AG04449 (cell line): ENCODE measurements at regions of chr22 and their contacts with region 1.

Region 1: GRCh38 chr22:42621505-42622002 is 6.9 kb upstream of the POLDIP3 start:
- DNase-seq: no peak
- H3K4me3 ChIP-seq: no peak overlapping the region
- CTCF ChIP-seq: peak; percentile 97

Region 2: DNA sequence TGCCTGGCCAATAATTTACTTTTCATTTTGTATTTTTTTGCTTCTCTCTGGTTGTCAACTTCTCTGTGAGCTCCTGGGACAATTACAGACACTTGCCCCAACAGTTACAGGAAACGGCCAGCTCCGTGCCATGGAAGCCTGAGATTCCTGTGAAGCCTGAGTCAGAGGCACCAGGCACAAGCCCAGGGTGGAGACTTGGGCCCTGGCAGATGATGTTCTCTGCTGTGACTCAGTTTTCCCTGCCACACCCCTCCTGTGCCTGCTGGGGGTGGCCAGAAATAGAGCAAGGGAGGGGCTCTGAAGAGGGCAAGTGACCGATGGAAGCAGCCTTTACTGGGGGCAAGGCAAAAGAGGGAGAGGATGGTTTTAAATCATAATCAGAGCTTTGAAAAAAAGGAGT is 14.0 kb after region 1 on chr22:
- CTCF ChIA-PET with region 1: interaction called, 45 read pairs
- POLR2A ChIA-PET with region 1: interaction called, 3 read pairs
- DNase-seq: peak; percentile 76
- H3K4me3 ChIP-seq: no peak overlapping the region
- CTCF ChIP-seq: no peak

Region 3: DNA sequence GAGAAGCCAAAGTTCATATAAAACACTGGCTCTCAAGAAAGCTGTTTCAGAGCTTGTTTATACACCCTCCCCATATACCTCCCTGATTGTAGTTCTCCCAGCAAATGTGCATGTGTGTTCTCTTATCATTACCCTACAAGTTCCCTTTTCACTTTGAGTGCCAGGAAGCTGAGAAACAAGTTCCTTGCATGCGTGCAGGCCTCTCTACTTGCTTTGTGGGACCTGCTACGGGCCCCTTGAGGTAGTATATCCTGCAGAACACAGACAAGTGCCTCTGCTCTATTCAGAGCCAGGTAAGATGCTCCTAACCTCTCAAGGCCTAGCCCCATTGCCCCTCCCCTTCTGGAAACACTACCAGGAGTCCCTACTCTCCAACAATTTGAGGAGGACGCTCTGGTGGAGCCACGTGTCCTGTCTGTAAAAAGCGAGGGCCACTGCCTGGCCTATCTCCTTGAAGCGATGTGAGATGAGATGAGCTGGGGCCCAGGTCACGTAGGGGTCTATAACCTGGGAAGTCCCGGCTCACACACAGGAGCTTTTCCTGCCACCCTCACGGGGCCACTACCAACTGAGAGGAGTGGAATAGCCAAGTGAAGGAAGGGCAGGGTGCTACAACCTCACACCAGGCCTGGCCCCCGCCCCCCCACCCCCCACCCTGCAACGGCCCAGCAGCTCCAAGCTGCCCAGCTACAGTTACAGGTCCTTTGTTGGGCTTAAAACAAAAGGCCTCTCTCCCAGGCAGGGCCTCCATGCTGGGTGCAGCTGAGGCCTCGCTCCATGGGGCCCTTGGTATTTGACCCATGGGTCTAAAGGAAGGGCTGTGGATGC is 21.5 kb after region 1 on chr22:
- CTCF ChIA-PET with region 1: interaction called, 34 read pairs
- POLR2A ChIA-PET with region 1: interaction called, 5 read pairs
- DNase-seq: no peak
- H3K4me3 ChIP-seq: no peak overlapping the region
- CTCF ChIP-seq: no peak

Region 4: DNA sequence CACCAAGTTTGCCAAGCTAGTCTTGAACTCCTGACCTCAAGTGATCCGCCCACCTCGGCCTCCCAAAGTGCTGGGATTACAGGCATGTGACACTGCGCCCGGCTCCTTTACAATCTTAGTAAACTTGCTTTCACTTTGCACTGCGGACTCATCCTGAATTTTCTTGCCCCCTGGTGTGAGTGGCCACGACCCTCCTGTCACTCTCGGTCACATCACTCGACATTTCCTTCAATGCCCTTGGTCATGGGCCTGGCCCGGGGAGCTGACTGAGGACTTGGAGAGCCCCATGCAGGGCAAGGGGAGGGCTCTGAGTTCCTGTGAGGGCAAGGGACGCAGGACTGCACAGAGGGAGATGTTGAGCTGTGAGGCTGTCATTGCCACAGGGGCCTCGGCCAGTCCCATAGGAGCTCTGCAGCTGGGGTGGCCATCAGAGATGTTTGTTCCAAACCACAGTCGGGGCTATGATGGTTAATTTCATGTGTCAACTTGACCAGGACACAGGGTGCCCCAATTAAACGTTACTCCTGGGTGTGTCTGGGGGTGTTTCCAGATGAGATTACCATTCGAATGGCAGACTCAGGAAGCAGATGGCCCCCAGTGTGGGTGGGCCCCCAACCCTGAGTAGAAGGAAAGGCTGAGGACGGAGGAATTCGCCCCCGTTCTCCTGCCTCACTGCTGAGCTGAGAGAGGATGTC is 77.9 kb after region 1 on chr22:
- CTCF ChIA-PET with region 1: interaction called, 12 read pairs
- POLR2A ChIA-PET with region 1: no interaction called
- DNase-seq: no peak
- H3K4me3 ChIP-seq: no peak overlapping the region
- CTCF ChIP-seq: no peak

Region 5: GRCh38 chr22:42780070-42780540 is 158.6 kb after region 1 on chr22:
- CTCF ChIA-PET with region 1: interaction called, 12 read pairs
- POLR2A ChIA-PET with region 1: no interaction called
- DNase-seq: peak; percentile 86
- H3K4me3 ChIP-seq: no peak overlapping the region
- CTCF ChIP-seq: peak; percentile 78

Region 6: DNA sequence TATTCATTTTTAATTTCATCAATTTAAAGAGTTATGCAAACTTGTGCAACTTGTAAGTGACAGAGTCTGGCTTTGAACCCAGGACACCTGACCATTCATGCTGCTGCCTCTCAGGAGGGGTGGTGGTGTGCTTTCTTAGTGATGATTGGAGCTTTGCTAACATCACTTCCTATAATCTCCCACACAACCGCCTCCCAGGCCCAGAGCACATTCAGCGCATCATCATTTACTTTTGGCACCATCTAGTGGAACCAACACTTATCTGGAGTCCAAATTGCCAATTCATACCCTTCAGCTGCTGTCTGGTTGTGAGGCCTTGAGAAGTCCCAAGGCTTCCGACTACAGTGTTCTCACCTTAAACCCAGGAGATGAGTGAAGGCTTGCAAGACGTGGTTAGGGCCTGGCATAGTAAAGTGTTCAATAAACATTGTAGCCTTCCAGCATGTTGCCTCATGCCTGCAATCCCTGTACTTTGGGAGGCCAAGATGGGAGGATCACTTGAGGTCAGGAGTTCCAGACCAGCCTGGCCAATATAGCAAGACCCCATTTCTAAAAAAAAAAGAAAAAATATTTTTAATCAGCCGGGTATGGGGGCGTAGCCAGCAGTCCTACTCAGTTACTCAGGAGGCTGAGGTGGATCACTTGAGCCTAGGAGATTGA is 468.7 kb after region 1 on chr22:
- CTCF ChIA-PET with region 1: interaction called, 15 read pairs
- POLR2A ChIA-PET with region 1: no interaction called
- DNase-seq: peak; percentile 50
- H3K4me3 ChIP-seq: no peak overlapping the region
- CTCF ChIP-seq: peak; percentile 64